Sciatic nerve (tissue), 2 donors: ENCODE measurements at regions of chr2 and their contacts with region 1.

Region 1: DNA sequence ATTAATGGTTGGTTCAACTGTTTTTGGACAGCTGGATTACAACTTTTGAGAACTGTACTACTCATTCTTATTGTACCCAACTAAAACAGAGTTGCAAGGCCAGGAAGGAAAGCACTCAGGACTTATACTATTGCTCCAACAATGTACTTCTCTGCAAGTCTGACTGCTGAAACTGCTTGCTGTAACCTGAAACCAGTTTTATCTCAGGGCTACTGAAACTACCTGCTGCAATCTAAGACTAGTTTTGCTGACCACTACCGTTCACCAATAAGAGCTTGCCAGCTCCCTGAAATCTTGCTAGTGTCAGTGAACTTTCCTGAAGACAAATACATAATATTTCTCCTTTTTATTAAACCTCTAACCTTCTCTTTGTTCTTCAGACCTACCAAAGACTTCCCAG is 157.3 kb downstream of the CDCA7 start:
- DNase-seq: no peak
- ATAC-seq: no peak

Region 2: GRCh38 chr2:173451137-173451536 is 60.8 kb before region 1 on chr2:
- intact Hi-C with region 1: no loop called
- DNase-seq: no peak
- ATAC-seq: no peak

Region 3: DNA sequence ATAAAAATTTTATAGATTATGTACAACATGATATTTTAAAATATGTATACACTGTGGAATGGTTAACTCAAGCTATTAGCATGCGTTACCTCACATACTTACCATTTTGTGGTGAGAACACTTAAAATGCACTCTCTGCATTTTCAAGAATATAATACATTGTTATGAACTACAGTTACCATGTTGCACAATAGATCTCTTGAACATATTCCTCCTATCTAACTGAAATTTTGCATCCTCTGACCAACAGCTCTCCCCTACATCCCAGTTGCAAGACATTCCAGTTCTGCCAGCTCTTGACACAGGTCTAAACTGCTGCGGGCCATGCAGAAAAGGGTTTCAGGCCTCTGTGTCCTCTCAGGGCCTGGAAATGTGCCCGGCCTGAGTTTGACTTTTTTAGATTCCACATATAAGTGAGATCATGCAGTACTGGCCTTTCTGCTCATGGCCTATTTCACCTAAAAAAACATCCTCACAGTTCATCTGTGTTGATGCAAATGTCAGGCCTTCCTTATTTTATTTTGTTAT is 43.6 kb before region 1 on chr2:
- intact Hi-C with region 1: loop called (anchors 2 kb)
- DNase-seq: no peak
- ATAC-seq: no peak

Region 4: DNA sequence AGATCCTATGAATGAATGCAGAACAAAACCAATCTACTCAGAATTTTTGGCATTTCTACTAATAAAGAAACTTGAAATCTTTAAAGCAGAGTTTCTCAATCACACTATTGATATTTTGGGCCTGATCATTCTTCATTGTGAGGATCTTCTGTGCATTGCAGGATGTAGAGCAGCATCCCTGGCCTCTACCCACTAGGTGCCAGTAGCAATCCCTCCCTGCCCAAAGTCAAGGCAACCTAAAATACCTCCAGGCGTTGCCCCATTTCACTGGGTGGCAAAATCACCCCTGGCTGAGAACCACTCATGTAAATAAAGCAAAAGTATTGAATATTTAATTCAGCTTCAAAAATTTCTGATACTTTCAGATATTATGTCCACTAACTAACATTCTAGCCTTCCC is 240.2 kb after region 1 on chr2:
- intact Hi-C with region 1: no loop called
- DNase-seq: no peak
- ATAC-seq: no peak